ENCODE measurements at regions of chr7 and their contacts with region 1.

Region 1: GRCh38 chr7:128455551-128456254 is at the start of gene HILPDA:
- DNase-seq: peak; percentile 93

Region 2: GRCh38 chr7:128409596-128410160 is 46.0 kb before region 1 on chr7 and contains the start of gene IMPDH1:
- CTCF ChIA-PET with region 1: interaction called, 4 read pairs
- POLR2A ChIA-PET with region 1: interaction called, 21 read pairs
- DNase-seq: peak; percentile 91

Region 3: DNA sequence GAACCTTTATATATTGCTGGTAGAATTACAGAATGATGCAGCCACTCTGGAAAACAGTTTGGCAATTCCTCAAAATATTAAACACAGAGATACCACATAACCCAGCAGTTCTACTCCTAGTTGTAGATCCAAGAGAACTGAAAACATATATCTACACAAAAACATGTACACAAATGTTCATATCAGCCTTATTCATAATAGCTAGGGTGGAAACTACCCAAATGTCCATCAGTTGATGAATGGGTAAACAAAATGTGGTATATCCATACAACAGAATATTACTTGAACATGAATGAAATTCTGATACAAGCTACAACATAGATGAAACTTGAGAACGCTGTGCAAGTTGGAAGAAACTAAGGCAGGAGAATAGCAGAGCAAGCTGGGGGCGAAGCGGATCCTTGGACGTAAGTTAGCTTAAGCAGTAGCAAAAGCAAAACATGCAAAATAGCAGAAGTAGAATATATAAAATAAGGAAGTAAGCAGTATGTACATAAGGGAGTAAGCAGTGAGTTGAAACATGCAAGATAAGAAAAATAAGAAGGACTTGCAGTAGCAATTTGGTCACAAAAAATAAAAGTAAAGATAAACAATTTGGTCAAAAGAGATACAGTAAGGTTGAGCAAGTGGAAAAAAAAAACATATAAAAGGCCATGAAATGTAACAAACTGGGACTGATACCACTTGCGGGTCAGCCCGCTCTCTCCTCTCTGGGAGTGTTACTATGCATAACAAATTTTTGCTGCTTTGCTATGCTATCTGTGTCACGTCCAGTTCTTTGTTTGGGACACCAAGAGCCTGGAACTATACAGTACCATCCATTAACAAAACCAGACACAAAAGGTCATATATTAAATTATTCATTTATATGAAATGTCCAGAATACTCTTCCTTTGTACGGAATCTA is 18.0 kb before region 1 on chr7:
- CTCF ChIA-PET with region 1: interaction called, 117 read pairs
- POLR2A ChIA-PET with region 1: interaction called, 19 read pairs
- DNase-seq: no peak

Region 4: GRCh38 chr7:128443831-128444600 is 11.7 kb before region 1 on chr7:
- CTCF ChIA-PET with region 1: interaction called, 9 read pairs
- POLR2A ChIA-PET with region 1: interaction called, 21 read pairs
- DNase-seq: no peak

Region 5: DNA sequence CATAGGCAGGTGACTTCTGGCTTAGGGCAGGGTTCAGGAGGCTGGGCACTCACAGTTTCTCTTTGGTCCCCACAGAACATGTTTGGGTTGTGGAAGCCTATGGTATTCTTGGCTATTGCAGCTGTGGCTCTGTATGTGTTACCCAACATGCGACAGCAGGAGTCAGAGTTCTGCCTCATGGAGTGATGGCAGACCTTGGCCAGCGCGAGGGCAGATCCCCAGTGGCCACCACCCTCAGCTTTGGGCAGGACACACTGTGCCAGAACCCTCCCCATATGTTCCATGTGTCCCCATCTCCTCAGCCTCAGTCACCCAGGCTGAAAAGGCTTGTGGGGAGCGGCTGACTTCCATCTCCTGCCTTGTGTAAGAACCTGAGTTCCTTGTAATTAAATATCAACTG is 366.0 kb after region 1 on chr7:
- CTCF ChIA-PET with region 1: no interaction called
- POLR2A ChIA-PET with region 1: no interaction called
- DNase-seq: no peak

Measured in HEK293T (cell line).